Psoas muscle (tissue), 8 donors: ENCODE measurements at regions of chr5 and their contacts with region 1.

Region 1: DNA sequence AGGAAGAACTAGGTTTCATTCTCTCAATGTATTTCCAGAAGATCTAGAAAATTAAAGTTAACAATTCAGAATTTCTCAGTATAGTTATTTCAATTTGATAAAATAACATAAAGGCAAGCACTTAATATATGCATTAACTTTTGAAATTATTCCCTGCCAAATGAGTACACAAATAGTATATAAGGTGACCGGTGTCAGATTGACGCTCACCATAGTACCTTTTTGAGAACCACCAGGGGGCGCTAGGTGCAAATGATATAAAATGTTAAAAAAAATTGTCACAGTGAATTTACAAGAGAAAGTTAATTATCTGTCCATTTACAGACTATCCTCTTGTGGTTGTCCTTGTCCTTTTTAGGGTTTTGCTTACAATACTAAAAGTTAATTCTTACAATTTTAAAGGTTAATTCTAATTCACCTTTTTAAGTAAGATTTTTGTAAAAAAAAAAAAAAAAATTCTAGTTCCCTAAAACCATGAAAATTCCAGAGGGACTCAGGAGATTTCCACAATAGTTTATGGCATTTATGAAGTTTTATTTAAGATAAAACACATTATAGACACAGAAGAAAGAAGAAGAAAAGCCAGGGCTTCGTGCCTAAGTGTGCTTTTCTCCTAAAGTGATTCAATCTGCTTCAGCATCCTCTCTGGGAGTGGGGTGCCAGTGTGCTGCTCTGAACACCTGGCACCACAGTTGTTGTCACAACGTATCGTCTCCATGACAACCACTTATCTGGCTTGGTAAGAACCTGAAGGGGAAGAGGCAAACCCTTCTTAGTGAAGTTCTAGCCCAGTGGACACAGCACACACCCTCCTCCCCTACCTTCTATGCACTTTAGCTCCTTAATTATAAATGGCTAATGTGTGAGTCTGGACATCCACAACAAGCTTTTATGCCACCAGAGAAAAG is 1.7 kb downstream of the ADAMTS16 start:
- DNase-seq: no peak
- ATAC-seq: peak; percentile 59 to 88 (median 68)
- H3K4me3 ChIP-seq: peak overlapping the region; percentile 61
- H3K27ac ChIP-seq: no peak overlapping the region
- H3K4me1 ChIP-seq: peaks cover 13% of the 10 kb centered on the region
- H3K27me3 ChIP-seq: peaks cover 0 to 26% (median 10%) of the 10 kb centered on the region in 3 donors
- CTCF ChIP-seq: peak; percentile 94

Region 2: DNA sequence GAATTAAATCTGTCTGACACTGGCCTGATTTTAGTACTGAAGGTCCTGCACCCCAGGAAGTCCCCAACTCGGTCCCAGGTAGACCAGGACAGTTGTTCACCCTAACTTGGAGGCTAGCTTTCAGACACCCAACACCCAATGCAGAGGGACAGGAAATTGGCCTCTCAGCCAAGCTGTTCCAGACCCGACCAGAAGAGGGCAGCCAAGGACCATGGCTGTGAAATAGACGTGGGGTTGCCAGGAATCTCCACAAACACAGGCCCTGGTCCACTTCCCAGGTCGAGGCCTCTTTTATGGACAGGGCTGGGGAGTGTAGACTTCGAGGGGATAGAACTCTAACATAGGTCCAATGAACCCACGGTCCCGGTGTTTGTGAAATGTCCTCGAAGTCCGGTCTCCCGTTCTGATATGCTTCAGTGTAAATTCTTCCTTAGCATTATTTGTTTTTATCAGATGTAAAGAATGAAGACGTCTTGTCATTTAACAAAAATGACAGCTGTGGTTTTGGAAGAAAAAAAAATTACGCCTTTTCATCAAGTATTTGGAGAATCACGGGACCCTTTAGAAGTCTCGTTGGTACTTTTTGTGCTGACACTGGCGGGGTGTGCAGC is 262.1 kb before region 1 on chr5:
- intact Hi-C with region 1: loop called in 1 of 2 experiments (anchors 5 kb)
- DNase-seq: peak; percentile 70 to 81
- ATAC-seq: peak; percentile 88 to 93 (median 90)
- H3K4me3 ChIP-seq: no peak overlapping the region
- H3K27ac ChIP-seq: no peak overlapping the region
- H3K4me1 ChIP-seq: no peaks in the 10 kb centered on the region
- H3K27me3 ChIP-seq: no peaks in the 10 kb centered on the region
- CTCF ChIP-seq: peak; percentile 92

Region 3: DNA sequence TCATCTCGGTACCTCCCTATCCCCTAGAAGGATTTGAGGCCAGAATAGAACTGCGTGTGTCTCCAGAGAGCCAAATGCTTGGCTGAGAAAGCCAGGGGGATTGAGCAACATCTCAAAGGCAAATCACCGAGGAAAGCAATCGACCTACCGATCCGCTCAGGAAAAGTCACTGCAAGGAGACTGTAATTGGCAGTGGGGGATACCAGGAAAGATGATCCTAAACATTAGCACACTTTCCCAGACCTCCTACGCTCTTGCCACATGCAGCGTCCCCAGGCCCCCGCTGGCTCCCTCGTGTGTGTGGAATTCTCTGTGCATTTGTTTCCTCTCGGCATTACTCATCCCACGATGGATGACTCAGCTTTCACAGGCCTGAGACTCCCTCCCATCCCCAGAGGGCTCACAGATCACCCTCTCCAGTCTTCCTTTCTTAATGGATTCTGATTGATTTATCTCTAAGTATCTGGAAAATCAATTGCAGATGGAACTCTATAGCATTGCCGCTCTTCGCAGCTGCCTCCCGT is 198.4 kb after region 1 on chr5:
- intact Hi-C with region 1: loop called in 1 of 2 experiments (anchors 5 kb)
- DNase-seq: peak; percentile 87 to 90
- ATAC-seq: peak; percentile 97 to 99 (median 98)
- H3K4me3 ChIP-seq: no peak overlapping the region
- H3K27ac ChIP-seq: peak overlapping the region; percentile 57
- H3K4me1 ChIP-seq: peaks cover 37% of the 10 kb centered on the region
- H3K27me3 ChIP-seq: no peaks in the 10 kb centered on the region
- CTCF ChIP-seq: peak; percentile 54

Region 4: DNA sequence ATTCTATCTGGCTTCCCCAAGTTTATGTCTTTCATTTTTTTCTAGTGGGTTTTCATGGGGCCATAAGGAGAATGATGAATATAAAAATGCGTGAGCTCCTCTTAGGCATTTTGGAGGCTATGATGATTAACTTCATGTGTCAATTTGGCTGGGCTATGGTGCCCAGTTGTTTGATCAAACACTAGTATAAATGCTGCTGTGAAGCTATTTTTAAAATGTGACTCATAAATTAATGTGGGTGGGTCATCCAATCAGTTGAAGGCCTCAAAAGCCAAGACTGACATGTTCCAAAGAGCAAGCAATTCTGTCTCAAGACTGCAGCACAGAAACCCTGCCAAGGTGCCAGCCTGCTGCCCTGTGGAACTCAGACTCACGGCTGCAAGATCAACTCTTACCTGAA is 256.2 kb after region 1 on chr5:
- intact Hi-C with region 1: loop called (anchors 2 to 5 kb)
- DNase-seq: no peak
- ATAC-seq: no peak
- H3K4me3 ChIP-seq: no peak overlapping the region
- H3K27ac ChIP-seq: no peak overlapping the region
- H3K4me1 ChIP-seq: no peaks in the 10 kb centered on the region
- H3K27me3 ChIP-seq: no peaks in the 10 kb centered on the region
- CTCF ChIP-seq: no peak

Region 5: DNA sequence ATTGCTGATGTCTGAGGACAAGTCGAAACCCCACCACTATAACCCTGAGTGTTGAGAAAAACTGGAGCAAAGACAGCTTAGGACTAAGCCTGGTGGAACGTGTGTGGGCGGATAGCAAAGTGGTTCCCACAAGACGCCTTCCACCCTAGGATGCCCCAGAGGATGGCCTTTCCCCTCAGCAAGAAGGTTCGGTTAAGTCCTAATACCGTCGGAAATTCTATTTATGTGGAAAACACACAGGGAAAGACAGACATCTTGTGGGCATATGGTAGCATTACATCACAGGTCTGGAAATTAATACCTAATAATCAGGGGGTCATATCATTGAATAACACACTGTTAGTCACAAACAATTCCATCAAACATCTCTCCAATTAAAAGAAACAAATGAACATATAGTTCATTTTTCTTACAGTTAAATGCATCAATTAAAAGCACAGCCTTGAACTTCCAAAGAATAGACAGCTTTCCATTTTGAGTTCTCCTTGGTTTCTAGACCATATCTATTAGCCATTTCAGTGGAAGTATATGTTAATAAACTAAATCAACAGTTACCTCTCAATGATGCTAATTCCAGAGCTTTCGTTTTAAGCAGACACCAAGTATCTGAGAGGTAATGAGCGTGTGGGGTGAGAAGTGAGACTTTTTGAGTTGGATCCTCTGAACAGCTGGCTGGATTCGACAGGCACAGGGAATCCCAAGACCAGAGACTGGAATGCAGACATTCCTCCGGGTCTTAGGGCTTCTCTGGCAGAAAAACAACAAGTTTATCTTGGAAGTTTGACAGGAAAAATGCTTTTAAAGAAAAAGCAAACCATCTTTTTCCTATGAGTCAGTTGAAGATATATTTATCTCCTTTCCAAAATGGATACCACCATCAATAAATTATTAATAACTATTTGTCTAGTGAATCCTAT is 277.7 kb after region 1 on chr5:
- intact Hi-C with region 1: loop called (anchors 1 to 5 kb)
- DNase-seq: no peak
- ATAC-seq: no peak
- H3K4me3 ChIP-seq: no peak overlapping the region
- H3K27ac ChIP-seq: no peak overlapping the region
- H3K4me1 ChIP-seq: peaks cover 21% of the 10 kb centered on the region
- H3K27me3 ChIP-seq: no peaks in the 10 kb centered on the region
- CTCF ChIP-seq: peak; percentile 76